BJ (cell line): ENCODE measurements at regions of chr20 and their contacts with region 1.

Region 1: DNA sequence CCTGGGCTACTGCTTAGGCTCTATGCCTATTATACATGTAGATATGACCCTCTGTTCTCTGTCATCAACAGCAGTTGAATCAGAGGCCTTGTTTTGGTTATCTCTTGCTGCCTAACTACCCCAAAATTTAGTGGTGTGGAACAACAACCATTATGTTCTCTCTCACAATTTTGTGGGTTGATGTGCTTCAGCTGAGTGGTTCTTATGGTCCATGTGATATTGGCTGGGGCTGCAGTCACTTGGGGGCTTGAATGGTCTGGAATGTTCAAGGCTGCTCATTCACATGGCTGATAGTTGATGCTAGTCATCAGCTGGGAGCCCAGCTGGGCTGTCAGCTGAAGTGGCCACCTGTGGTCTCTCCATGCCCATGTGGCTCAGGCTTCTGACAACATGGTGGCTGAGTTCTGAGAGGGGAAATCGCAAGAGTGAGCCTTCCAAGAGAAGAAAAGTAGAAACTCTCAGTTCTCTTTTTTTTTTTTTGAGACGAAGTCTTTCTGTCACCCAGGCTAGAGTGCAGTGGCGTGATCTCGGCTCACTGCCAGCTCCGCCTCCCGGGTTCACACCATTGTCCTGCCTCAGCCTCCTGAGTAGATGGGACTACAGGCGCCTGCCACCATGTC is 47.8 kb downstream of the SHLD1 start:
- DNase-seq: no peak
- H3K4me3 ChIP-seq: no peak overlapping the region
- H3K27me3 ChIP-seq: no peaks in the 10 kb centered on the region
- CTCF ChIP-seq: no peak

Region 2: GRCh38 chr20:5486377-5487054 is 311.4 kb before region 1 on chr20:
- CTCF ChIA-PET with region 1: no interaction called
- POLR2A ChIA-PET with region 1: interaction called, 16 read pairs
- DNase-seq: no peak
- H3K4me3 ChIP-seq: no peak overlapping the region
- H3K27me3 ChIP-seq: peaks cover 6% of the 10 kb centered on the region
- CTCF ChIP-seq: no peak

Region 3: DNA sequence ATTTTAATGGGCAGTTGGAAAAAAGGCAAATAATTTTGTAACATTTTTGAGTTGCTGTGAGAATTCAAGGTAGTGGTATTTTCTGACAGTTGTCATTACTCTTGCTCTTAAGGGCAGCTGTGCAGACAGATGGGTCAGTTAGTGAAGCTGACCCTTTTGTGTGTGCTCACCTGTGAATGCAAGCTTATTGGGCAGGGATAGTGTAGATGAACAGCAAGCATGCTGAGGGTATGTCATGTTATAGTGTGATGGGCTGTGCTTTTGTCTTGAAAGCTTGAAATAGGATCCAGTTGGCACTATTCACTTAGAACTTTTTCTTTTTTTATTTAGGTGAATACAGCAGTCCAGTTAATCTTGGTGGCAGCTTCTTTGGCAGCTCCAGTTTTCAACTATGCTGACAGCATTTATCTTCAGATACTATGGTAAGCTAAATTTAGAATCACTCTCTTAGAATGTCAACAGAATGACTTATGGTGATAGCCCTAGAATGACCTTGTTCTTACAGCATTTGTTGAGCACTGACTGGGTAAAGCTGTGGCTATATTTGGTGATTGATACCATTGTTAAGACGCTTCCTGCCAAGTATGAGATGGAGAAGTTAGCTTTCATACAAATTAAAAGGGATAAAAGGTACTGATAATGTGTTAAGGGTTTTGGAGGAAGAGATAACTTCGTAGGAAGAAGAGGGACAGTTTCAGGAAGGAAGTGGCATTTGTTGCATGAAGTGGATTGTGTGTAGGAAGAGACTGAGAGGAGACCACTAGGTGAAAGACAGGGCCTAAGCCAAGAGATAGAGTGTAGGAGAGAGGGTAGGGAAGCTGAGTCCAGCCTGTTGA is 236.4 kb after region 1 on chr20:
- CTCF ChIA-PET with region 1: no interaction called
- POLR2A ChIA-PET with region 1: no interaction called
- DNase-seq: no peak
- H3K4me3 ChIP-seq: no peak overlapping the region
- H3K27me3 ChIP-seq: no peaks in the 10 kb centered on the region
- CTCF ChIP-seq: no peak